ENCODE measurements at regions of chr14 and their contacts with region 1.

Region 1: GRCh38 chr14:91947471-91948184 is at the start of gene FBLN5:
- DNase-seq: peak; percentile 81
- ATAC-seq: peak; percentile 88
- total RNA-seq, gene FBLN5: 172 TPM

Region 2: GRCh38 chr14:91878274-91878673 is 69.4 kb before region 1 on chr14:
- intact Hi-C with region 1: no loop called
- DNase-seq: no peak
- ATAC-seq: no peak

Region 3: GRCh38 chr14:91893007-91893406 is 54.6 kb before region 1 on chr14:
- intact Hi-C with region 1: loop called (anchors 10 kb)
- DNase-seq: no peak
- ATAC-seq: no peak

Region 4: DNA sequence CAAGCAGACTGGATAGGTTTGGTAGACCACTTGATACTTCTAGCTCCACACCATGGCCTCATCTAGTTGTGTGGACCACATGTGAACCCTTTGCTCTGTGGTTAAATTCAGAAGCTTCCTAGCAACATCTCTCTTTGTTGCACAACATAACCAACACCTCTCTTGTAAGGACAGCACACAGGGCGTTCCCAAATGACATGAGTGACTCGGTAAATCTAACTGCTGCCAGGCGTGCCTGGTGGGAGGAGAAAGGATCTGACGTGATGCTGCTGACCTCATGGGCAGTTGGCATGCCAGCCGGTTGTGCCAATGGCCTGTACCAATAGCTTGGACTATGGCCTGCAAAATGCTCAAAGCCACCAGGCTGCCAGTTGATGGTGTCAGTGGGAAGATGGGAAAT is 268.0 kb after region 1 on chr14:
- intact Hi-C with region 1: no loop called
- DNase-seq: no peak
- ATAC-seq: no peak

Measured in sciatic nerve (tissue), 2 donors.